ENCODE measurements at regions of chr2 and their contacts with region 1.

Region 1: DNA sequence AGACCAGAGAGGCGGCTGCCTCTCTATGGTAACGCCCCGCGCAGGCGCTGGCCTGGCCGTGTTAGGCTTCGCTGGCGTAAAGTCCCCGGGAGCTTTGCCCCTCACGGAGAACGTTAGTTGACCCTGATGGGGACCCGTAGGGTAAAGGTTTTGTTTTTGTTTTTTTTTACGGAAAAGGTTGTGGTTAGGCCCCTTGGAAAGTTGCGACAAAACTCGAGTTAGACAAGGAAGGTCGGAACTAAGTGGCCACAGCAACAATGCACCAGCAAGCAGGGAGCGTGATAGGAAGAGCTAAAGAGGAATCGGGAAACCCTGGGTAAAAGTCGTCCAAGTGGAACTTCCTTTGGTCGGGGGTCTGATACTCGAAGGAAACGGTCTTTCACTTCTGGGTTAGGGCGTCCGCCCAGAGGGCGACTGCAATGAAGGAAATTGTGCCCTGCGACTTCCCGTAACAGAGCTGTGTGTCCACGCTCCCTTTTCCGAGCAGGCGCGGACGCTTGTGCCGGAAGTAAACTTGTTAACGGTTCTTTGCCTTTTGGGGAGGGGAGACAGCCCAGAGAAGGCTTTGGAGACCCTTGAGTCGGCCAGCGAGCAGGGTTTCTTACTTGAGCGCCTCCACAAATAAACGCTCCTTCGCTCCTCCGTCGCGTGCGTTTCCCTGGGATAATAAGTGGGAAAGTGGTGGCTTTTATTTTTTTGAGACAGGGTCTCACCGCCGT is 493 bp upstream of the CLASP1 start:
- DNase-seq: peak; percentile 93
- H3K4me3 Mint-ChIP-seq: peak overlapping the region; percentile 96
- H3K27ac Mint-ChIP-seq: peak overlapping the region; percentile 98
- H3K4me1 Mint-ChIP-seq: peaks cover 35% of the 10 kb centered on the region
- H3K27me3 Mint-ChIP-seq: no peaks in the 10 kb centered on the region
- CTCF ChIP-seq: no peak

Region 2: GRCh38 chr2:121596221-121597080 is 53.3 kb before region 1 on chr2:
- CTCF ChIA-PET with region 1: interaction called, 3 read pairs
- intact Hi-C with region 1: loop called (anchors 2 kb)
- DNase-seq: peak; percentile 40
- H3K4me3 Mint-ChIP-seq: peak overlapping the region; percentile 63
- H3K27ac Mint-ChIP-seq: peak overlapping the region; percentile 60
- H3K4me1 Mint-ChIP-seq: peaks cover 40% of the 10 kb centered on the region
- H3K27me3 Mint-ChIP-seq: no peaks in the 10 kb centered on the region
- CTCF ChIP-seq: peak; percentile 65

Region 3: DNA sequence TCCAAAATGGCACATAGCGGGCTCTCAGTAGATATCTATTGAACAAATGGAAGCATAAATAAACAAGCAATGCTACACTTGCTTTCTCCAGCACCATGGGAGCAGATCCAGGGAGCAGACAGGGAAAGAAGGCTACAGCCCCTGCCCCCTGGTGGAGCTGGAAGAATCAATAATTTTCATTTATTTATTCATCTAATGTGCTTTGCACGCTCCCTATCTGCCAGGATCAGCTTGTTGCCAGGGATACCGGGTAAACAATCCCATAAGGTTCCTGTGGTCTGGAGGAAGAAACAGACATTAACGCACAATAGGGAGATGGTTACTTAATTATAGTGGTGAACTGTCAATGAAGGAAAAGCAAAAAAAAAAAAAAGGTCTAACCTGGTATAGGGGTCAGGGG is 39.6 kb after region 1 on chr2:
- CTCF ChIA-PET with region 1: no interaction called
- intact Hi-C with region 1: loop called (anchors 2 kb)
- DNase-seq: peak; percentile 76
- H3K4me3 Mint-ChIP-seq: no peak overlapping the region
- H3K27ac Mint-ChIP-seq: peak overlapping the region; percentile 96
- H3K4me1 Mint-ChIP-seq: peaks cover 32% of the 10 kb centered on the region
- H3K27me3 Mint-ChIP-seq: no peaks in the 10 kb centered on the region
- CTCF ChIP-seq: peak; percentile 44

Region 4: GRCh38 chr2:121710470-121711170 is 60.9 kb after region 1 on chr2:
- CTCF ChIA-PET with region 1: interaction called, 5 read pairs
- intact Hi-C with region 1: loop called (anchors 2 kb)
- DNase-seq: peak; percentile 57
- H3K4me3 Mint-ChIP-seq: peak overlapping the region; percentile 60
- H3K27ac Mint-ChIP-seq: peak overlapping the region; percentile 92
- H3K4me1 Mint-ChIP-seq: peaks cover 71% of the 10 kb centered on the region
- H3K27me3 Mint-ChIP-seq: no peaks in the 10 kb centered on the region
- CTCF ChIP-seq: no peak

Region 5: DNA sequence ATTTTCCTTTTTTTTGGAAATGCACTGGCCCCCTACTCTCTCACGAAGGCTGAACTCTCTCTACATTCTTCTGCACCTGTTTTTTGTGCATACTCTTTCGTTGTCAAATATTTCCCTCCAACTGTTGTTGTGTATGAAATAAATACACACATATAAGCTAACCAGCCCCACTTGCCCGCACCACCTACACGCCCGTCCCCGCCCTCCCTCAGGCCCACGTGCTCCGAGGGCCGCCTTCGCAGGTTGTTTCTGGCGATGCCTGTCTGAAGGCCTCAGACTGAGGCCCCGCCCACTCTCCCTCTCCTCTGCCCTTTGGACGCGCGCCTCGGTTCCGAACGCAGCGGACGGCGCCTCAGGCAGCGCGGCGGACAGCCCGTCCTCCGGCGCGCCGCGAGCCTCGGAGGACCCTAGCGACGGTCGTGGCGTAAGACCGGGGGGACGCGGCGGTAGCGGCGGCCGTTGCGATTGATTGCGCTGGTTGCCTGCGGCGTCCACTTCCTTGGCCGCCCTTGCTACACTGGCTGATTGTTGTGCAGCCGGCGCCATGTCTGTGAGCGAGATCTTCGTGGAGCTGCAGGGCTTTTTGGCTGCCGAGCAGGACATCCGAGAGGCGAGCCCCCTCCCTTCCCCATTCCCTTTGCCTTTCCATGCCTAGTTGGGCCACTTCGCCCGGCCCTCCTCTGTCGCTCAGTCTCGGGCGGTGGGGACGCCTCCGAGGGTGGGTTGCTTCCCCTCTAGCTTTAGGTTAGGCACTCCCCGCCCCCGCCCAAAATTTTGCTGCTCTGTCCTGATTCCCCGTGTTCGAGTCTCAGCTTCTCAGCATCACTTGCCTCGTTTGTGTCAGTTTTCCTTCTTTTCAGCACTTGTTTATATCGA is 105.7 kb after region 1 on chr2 and contains the start of gene TSN:
- CTCF ChIA-PET with region 1: interaction called, 13 read pairs
- intact Hi-C with region 1: no loop called
- DNase-seq: peak; percentile 98
- H3K4me3 Mint-ChIP-seq: peak within 1 kb of the TSS; percentile 79
- H3K27ac Mint-ChIP-seq: peak within 1 kb of the TSS; percentile 95
- H3K4me1 Mint-ChIP-seq: peaks cover 8% of the 10 kb centered on the region
- H3K27me3 Mint-ChIP-seq: no peaks in the 10 kb centered on the region
- CTCF ChIP-seq: no peak
- total RNA-seq, gene TSN: 125 and 142 TPM in 2 replicates

Measured in Calu3 (cell line).